ENCODE measurements at regions of chr1 and their contacts with region 1.

Region 1: GRCh38 chr1:204363335-204364124 is 3.8 kb upstream of the PLEKHA6 start:
- DNase-seq: peak; percentile 59 to 79
- ATAC-seq: peak; percentile 80 to 91 (median 86)
- H3K4me3 ChIP-seq: peak overlapping the region; percentile 65
- H3K27ac ChIP-seq: no peak overlapping the region
- H3K4me1 ChIP-seq: peaks cover 6% of the 10 kb centered on the region
- H3K27me3 ChIP-seq: peaks cover 0 to 6% (median 2%) of the 10 kb centered on the region in 3 donors
- CTCF ChIP-seq: peak; percentile 96

Region 2: DNA sequence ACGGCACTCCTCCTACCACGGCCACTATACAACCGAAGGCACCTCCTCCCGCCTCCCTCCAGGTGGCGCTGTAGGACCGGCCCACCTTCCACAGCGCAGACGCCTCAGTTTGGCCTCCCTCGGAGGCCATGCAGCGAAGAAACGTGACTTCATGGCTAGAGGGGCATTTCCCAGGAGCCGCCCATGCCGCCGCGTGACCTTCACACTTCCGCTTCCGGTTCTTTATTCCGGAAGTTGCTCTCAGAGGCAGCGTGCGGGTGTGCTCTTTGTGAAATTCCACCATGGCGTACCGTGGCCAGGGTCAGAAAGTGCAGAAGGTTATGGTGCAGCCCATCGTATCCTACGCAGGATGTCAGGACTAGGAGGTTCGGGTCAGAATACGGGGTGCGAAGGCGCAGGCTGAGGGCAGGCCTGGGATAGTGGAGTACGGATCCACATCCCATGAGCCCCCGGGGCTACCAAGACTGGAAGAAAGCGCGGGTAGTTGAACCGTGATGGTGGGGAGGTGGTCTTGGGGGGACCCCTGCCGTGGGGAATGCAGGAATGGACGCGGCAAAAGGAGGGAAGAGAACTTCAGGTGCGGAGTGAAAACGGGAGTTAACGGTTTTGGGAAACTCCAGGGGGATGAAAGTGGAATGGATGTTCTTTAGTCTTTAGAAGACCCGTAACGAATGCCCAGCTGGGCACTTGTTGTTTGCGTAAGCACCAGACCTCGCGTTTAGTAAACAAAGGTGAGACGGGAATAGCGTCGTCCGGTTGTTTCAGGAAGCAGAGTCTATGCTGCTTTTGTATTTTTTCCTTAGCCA is 501.9 kb before region 1 on chr1 and contains the start of gene SNRPE:
- intact Hi-C with region 1: loop called (anchors 10 kb)
- DNase-seq: peak; percentile 95 to 98
- ATAC-seq: peak; percentile 97 to 98 (median 98)
- H3K4me3 ChIP-seq: peak within 1 kb of the TSS; percentile 100
- H3K27ac ChIP-seq: peak within 1 kb of the TSS; percentile 91
- H3K4me1 ChIP-seq: peaks cover 17% of the 10 kb centered on the region
- H3K27me3 ChIP-seq: no peaks in the 10 kb centered on the region
- CTCF ChIP-seq: peak; percentile 95
- total RNA-seq, gene SNRPE: 30.4 to 68.1 (median 56.6) TPM

Region 3: DNA sequence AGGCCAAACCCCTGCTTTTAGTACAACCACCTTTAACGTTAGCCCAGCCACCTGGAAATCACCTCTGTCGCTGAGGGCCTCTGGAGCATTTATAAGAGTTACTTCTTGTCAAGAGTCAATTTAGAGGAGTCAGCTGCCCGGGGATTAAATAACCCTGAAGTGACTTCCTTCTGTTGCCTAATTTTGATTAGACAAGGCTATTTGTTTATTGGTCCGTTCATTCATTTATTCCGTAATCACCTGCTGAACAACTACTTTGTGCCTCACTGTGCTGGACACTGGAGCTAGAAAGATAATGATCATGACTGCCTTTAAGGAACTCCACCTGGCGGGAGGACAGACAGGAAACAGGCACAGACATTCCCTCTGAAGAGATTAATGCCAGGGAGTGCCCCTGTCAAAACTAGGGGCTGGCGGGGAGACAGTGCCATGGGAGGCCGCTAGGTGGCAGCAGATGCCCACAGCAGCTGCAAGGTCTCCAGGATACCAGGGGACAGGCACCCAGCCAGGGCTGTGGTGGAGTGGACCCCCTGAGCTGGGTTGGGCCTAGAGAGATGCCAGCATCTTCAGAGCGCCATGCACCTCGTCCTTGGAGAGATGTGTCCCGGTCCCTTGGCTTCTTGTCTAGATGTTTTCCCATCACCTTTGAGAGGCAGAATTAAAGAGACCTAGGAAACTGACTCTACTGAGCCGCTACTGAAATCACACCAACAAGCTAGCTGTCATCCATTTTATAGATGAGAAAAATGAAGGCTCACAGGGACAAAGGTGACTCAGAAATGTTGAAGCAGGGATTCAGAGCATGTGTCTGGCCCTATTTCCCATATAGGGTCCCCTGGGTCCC is 201.1 kb before region 1 on chr1:
- intact Hi-C with region 1: loop called (anchors 1 to 5 kb)
- DNase-seq: peak; percentile 79 to 89
- ATAC-seq: peak; percentile 89 to 98 (median 95)
- H3K4me3 ChIP-seq: no peak overlapping the region
- H3K27ac ChIP-seq: no peak overlapping the region
- H3K4me1 ChIP-seq: no peaks in the 10 kb centered on the region
- H3K27me3 ChIP-seq: peaks cover 0 to 2% (median 0%) of the 10 kb centered on the region in 3 donors
- CTCF ChIP-seq: peak; percentile 100

Region 4: GRCh38 chr1:204213668-204214662 is 149.6 kb before region 1 on chr1 and contains the start of gene GOLT1A:
- intact Hi-C with region 1: loop called in 1 of 2 experiments (anchors 1 kb)
- DNase-seq: peak; percentile 56 to 82
- ATAC-seq: peak; percentile 69 to 76 (median 73)
- H3K4me3 ChIP-seq: peak within 1 kb of the TSS; percentile 38
- H3K27ac ChIP-seq: no peak within 1 kb of the TSS
- H3K4me1 ChIP-seq: no peaks in the 10 kb centered on the region
- H3K27me3 ChIP-seq: peaks cover 0 to 35% (median 2%) of the 10 kb centered on the region in 3 donors
- CTCF ChIP-seq: peak; percentile 54
- total RNA-seq, gene GOLT1A: not detected

Region 5: DNA sequence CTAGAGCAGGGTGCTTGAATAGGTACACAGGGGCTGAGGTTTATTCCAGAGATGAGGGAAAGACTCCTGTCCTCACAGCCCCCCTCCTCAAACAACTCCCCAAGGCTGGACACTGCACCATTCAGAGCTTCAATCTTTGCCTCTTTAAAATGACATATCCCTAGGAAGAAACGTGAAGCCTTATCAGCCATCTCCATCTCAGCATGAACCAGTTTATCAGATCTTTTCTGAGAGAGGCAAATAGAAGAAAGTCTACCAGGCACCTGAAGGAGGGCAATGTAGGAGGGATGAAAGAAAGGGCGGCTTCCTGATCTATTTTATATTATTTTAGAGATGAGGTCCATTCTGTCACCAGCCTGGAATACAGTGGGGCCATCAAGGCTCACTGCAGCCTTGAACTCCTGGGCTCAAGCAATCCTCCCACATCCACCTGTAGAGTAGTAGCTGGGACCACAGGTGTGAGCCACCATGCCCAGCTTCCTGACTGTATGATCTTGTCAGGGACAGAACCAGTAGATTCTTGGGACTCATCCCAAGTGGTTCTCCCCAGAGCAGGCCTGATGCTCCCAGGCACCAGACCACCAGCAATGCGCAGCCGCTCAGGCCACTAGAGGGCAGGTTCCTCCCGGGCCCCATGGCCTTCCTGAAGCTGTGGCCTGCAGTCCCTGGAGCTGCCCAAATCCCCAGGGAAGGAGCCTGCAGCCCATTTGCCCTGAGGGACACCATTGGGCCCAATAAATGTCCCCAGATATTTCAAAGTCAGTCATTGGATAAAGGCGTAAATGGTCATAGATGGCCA is 105.4 kb before region 1 on chr1:
- intact Hi-C with region 1: loop called (anchors 2 to 5 kb)
- DNase-seq: peak; percentile 39 to 66
- ATAC-seq: peak; percentile 44 to 61 (median 52)
- H3K4me3 ChIP-seq: no peak overlapping the region
- H3K27ac ChIP-seq: no peak overlapping the region
- H3K4me1 ChIP-seq: no peaks in the 10 kb centered on the region
- H3K27me3 ChIP-seq: no peaks in the 10 kb centered on the region
- CTCF ChIP-seq: peak; percentile 54

Region 6: DNA sequence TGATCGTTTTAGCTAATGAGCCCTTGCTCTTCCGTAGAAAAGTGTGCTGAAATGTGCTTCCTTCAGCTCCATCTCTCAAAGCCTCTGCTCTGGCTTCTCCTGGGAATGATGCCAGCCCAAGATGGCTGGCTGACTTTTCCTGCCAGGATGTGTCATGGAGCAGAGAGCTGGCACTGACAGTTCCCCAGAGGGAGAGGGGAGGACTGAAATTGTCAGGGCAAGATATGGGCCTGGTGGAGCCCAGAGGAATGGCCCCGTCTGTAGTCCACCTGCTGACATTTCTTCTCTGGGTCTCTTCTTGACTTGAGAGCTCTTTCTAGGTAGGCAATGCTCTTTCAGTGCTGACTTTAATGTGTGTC is 21.4 kb after region 1 on chr1:
- intact Hi-C with region 1: no loop called
- DNase-seq: no peak
- ATAC-seq: peak in 3 of 4 donors; percentile 63 to 75 (median 73)
- H3K4me3 ChIP-seq: no peak overlapping the region
- H3K27ac ChIP-seq: no peak overlapping the region
- H3K4me1 ChIP-seq: no peaks in the 10 kb centered on the region
- H3K27me3 ChIP-seq: no peaks in the 10 kb centered on the region
- CTCF ChIP-seq: no peak

Region 7: DNA sequence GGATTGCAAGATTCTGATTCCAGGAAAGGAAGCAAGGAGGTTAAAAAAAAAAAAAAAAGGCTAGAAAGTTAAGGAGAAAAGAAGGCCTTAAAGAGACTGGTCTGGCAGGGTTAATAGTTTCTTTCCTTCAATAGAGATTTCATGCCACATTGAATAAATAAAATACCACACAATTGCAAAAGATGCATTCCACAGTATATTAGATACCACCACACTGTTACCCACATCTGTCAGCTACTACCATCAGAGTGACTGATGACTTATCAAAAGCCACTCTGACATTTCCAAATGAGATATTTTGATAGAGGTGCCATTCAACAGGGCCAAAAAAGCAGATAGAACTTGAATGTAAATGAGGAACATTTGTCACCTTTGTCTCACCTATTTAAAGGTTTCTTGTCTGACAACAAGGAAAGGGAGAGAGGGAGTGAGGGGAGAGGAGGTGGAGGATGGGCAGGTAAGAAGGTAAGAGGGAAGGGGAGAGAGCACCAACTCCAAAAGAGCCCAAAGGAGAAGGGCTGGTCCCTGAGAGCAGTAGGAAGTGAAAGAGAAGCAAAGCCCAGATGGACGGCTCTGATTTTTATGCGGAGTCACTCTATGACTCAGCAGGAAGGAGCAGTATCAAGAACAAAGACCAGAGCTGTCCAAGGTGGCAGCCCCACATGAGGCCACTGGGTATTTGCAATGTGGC is 283.7 kb after region 1 on chr1:
- intact Hi-C with region 1: no loop called
- DNase-seq: no peak
- ATAC-seq: peak in 3 of 4 donors; percentile 48 to 64 (median 60)
- H3K4me3 ChIP-seq: no peak overlapping the region
- H3K27ac ChIP-seq: no peak overlapping the region
- H3K4me1 ChIP-seq: no peaks in the 10 kb centered on the region
- H3K27me3 ChIP-seq: peaks cover 0 to 9% (median 2%) of the 10 kb centered on the region in 3 donors
- CTCF ChIP-seq: no peak

Measured in psoas muscle (tissue), 8 donors.